Common myeloid progenitor, CD34-positive (primary cell): ENCODE measurements at regions of chr6 and their contacts with region 1.

Region 1: DNA sequence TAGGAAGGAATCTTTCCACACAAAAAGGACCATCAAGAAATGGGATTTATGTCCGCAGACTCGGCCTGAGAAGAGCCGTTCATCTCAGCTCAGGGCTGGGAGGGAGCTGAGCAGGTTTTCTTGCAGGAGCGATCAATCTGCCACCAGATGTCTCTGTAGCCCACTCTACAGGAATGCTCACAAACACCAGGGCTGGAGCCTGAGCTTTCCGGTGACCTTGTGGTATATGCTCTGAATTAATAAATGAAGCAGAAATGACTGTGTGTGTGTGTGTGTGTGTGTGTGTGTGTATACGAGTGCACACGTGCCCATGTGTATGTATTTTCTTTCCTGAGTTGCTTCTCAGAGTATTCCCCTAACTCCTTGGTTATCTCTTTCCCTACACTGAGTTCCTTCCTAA is 12.0 kb downstream of the CD83 start:
- DNase-seq: peak; percentile 83 to 90 (median 89)
- H3K4me3 ChIP-seq: no peak overlapping the region
- H3K27ac ChIP-seq: no peak overlapping the region
- H3K4me1 ChIP-seq: peaks cover 0 to 8% (median 6%) of the 10 kb centered on the region in 4 experiments
- H3K27me3 ChIP-seq: no peaks in the 10 kb centered on the region

Region 2: DNA sequence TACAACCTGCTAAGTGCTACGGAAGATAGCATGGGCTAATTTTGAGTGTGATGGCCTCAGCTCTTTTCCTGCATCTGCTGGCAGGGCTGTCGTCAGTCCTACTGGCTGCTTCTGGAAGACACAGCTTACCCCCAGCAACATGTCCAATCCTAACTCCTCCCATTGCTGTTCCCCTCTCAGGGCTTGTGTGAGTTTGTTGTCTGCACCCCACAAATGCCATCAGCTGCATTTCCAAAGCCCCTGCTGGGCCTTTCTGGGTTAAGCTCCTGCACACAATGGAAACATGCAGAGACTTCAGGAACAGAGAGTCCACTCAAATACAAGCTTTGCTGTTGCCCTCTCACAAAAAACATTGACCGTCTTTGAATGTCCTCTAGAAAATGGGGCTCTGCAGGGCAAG is 120.1 kb before region 1 on chr6:
- CTCF ChIA-PET with region 1: no interaction called
- POLR2A ChIA-PET with region 1: no interaction called
- DNase-seq: no peak
- H3K4me3 ChIP-seq: no peak overlapping the region
- H3K27ac ChIP-seq: no peak overlapping the region
- H3K4me1 ChIP-seq: no peaks in the 10 kb centered on the region
- H3K27me3 ChIP-seq: peaks cover 0 to 5% (median 0%) of the 10 kb centered on the region in 5 experiments

Region 3: GRCh38 chr6:14117158-14118090 is 12.2 kb before region 1 on chr6 and contains the start of gene CD83:
- CTCF ChIA-PET with region 1: interaction called, 28 read pairs
- POLR2A ChIA-PET with region 1: interaction called, 3 read pairs
- DNase-seq: peak; percentile 90 to 94 (median 93)
- H3K4me3 ChIP-seq: peak within 1 kb of the TSS; percentile 53 to 88 (median 72)
- H3K27ac ChIP-seq: peak within 1 kb of the TSS in 1 of 2 experiments; percentile 78
- H3K4me1 ChIP-seq: peaks cover 7 to 25% (median 22%) of the 10 kb centered on the region in 4 experiments
- H3K27me3 ChIP-seq: no peaks in the 10 kb centered on the region

Region 4: GRCh38 chr6:14144678-14145113 is 15.1 kb after region 1 on chr6:
- CTCF ChIA-PET with region 1: interaction called, 34 read pairs
- POLR2A ChIA-PET with region 1: no interaction called
- DNase-seq: peak; percentile 80 to 85 (median 82)
- H3K4me3 ChIP-seq: no peak overlapping the region
- H3K27ac ChIP-seq: no peak overlapping the region
- H3K4me1 ChIP-seq: peaks cover 0 to 9% (median 0%) of the 10 kb centered on the region in 4 experiments
- H3K27me3 ChIP-seq: peaks cover 0 to 2% (median 0%) of the 10 kb centered on the region in 5 experiments